ENCODE measurements at regions of chr11 and their contacts with region 1.

Region 1: DNA sequence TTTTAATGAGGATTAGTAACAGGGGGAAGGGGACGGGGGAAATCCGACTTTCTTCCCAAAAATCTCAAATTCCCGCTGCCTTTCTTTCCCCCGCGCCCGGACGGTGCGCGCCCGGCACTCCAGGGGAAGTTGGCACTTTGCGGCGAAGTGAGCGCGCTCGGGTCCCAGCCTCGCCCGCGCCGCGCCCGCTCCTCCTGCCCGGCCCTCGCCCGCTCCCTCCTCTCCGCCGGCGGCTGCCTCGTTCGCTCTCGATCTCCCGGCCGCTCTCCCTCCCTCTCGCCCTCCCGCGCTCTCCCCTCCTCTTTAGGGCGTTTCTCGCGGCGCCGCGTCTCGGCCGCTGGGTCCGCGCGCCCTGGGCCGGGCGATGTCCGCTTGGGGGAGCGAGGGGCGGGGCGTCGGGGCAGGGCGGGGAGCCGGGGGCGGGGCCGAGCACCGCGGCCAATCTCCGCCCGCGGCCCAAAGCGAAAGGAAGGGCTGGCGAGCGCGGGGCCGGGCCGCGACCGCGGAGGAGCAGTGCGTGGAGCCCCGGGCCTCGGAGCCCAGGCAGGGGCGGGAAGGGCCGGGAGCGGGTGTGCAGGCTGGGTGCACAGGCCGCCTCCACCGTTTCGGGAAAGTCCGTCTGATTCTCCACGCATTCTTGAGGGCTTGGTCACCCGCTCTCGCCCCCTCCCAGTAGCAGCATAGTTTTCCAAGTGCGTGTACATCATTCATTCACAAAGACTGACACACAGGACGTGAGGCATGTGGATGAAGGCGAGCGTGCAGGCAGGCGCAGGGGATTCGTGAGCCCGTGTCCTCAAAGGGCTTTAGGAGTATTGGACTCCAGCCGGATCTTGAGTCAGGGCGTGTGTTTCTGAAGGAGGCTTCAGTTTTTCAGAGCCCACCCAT is 65.1 kb downstream of the ETS1 start:
- DNase-seq: peak; percentile 95
- ATAC-seq: peak; percentile 97 to 98

Region 2: DNA sequence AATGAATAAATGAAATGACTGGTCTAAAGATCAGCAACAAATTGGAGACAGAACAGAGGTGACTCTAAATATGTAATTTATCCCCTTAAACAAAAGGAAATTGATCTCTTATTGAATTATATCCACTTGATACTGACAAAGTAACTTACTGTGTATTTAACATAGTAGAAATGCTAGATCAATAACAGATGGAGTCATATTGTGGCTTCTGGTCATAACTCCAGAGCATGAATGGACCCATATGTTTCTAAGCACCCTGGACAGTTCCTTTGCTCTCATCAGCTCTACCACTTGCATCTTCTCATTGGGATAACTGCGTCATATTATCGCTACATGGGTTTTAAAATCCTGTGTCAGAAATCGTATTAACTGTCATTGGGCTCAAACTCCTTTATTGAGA is 157.3 kb before region 1 on chr11:
- intact Hi-C with region 1: no loop called
- DNase-seq: no peak
- ATAC-seq: no peak

Region 3: DNA sequence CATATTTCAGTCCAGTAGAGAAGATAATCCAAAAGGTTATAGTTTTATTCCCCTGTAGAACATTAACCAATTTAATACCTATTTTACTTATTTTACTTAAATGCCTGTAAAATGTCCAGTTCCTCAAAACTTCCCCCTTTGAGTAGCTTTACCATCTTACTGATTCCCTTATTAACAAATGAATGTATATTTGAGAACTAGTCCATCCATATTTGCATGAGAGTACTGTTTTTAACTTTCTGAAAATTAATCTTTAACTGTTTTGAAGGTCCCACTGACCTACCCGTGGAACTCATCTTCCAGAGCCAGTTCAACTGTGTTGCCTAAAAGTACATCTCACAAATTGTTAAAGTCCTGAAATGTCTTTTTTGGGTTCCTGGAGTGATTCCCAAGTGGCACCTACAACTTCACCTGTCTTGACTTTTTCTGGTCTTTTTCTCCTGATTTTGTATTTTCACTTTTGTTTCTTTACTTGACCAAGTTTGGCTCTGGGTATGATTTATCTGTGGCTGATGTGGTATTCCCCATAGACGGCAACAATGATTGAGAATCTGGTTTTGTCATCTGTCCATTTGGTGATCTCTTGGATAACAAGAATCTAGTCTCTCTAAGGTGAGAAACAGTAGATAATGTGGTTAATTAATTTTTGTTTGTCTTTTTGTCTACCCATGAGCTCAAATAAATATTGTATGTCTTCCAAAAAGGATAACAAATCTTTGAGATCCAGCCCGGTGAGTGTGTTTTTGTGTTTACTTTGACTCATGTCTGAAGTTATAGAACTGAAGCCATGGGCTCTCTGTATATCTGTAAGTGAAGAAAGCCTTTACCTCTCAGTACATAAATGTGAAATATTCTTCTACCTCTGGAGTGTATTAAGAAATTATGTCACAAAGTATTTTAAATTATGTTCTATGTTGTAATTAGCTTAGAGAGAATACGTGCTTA is 109.2 kb before region 1 on chr11:
- intact Hi-C with region 1: no loop called
- DNase-seq: no peak
- ATAC-seq: no peak

Region 4: GRCh38 chr11:128467610-128468041 is 54.7 kb before region 1 on chr11:
- intact Hi-C with region 1: loop called in 1 of 2 experiments (anchors 5 kb)
- DNase-seq: peak; percentile 49
- ATAC-seq: peak; percentile 12 to 69

Region 5: DNA sequence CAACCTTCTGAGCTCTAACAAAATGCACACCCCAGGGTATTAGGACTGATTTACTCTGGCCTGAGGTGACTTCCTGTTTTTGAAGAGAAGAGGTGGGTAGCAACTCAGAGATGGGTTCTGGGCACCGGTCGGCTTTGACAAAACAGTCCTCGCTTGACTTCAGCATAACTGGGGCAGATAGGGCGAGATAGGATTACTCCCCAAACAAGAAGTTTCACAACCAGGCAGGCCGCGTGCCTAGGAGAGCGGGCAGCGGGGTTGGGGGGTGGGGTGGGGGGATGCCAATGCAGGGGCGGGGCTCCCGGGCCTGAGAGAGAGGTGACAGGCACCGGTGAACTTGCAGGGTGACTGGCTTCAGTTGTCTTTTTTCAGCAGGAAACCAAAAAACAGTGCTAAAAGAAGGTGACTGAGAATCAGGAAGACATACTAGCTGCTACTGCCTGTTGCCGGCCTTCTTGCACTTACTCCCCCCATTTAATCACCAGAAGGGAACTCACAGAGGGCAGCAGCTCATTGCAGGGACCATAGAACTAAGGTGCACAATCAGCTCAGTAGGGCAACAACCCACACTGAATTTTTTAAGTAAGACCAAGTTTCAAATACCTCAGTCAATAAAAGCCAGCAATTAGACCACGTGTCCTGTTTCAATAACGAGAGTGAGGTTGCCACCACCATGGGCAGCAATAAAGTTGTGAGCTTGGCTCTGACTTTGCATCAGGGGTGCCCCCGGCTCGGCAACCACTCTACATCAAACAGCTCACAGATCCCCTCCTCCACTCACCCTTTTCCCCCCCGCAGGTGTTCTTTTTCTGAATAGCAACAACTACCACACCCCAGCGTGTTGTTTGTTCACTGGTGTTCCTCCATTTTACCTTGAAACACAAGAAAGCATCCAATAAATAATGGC is 102.2 kb after region 1 on chr11:
- intact Hi-C with region 1: loop called in 1 of 2 experiments (anchors 10 kb)
- DNase-seq: no peak
- ATAC-seq: peak in 1 of 2 donors; percentile 54

Region 6: DNA sequence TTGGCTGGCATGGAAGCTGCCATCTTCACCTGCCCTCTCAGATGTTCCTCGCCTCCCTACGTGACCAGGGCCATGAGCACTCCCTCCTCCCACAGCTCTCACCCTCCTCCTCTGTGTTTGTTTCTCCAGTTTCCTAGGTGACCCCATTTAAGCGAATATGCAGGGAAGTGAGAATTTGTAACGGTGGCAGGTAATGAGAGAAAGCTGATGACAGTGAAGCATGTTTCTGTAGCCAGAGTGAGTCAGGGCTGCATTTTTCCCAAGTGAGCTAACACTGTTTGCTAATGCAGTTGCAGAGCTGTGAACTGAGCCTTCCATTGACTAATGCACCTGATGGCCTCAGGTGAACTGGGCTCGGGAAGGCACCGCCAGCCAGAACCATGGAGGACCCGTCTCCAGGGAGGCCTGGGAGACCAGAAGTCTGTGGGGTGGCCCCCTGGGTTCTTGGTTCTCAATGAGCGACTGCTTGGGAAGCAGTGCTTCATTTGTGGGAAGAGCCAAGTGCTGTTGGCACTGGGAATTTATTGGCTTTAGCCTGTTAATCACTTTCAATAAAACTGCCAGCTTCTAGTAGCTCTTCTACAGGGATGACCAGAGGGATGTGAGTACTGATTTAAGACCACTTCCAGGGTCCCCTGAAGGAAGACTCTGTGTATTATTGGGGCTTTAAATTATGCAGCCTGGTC is 917.9 kb after region 1 on chr11:
- intact Hi-C with region 1: no loop called
- DNase-seq: no peak
- ATAC-seq: peak; percentile 50 to 91

Measured in left cardiac atrium (tissue), 4 donors.